ENCODE measurements at regions of chrX and their contacts with region 1.

Region 1: DNA sequence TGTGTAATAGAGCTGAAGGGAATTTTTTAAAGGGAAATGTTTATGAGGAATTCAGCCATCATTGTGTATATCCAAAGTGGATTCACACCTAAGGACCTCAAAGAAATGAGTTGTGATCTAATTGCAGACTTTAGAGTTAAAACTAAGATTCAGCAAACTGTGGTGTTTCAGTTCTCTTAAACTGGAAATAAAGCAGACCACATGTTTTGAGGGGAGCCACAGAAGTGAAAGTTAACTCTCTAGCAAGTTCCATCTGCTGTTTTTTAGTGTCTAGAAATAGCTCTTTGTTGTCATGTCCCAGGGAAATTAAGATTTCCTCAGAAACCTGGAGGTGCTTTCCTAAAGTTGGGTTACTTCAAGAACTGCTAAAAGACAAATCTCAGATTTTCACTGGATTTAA is 97.3 kb upstream of the DDX3X start:
- DNase-seq: peak; percentile 64
- ATAC-seq: peak; percentile 91
- H3K4me3 ChIP-seq: no peak overlapping the region
- H3K27ac ChIP-seq: peak overlapping the region; percentile 35; the same call in 1 of the 2 replicates
- H3K4me1 ChIP-seq: peaks cover 19% of the 10 kb centered on the region; the same call in 1 of the 2 replicates
- H3K27me3 ChIP-seq: no peaks in the 10 kb centered on the region
- CTCF ChIP-seq: no peak
- EP300 ChIP-seq: peak; percentile 84 to 85
- POLR2A ChIP-seq: no peak
- RAD21 ChIP-seq: no peak

Region 2: GRCh38 chrX:41224606-41225005 is 12.0 kb before region 1 on chrX:
- CTCF ChIA-PET with region 1: interaction called, 5 read pairs
- POLR2A ChIA-PET with region 1: no interaction called
- RAD21 ChIA-PET with region 1: no interaction called
- SMC1A ChIA-PET with region 1: interaction called, 12 read pairs
- in situ Hi-C with region 1: no loop called
- intact Hi-C with region 1: no loop called
- DNase-seq: no peak
- ATAC-seq: no peak
- H3K4me3 ChIP-seq: no peak overlapping the region
- H3K27ac ChIP-seq: no peak overlapping the region
- H3K4me1 ChIP-seq: no peaks in the 10 kb centered on the region
- H3K27me3 ChIP-seq: no peaks in the 10 kb centered on the region
- CTCF ChIP-seq: no peak
- EP300 ChIP-seq: no peak
- POLR2A ChIP-seq: no peak
- RAD21 ChIP-seq: no peak

Region 3: GRCh38 chrX:41259516-41259915 is 22.9 kb after region 1 on chrX:
- CTCF ChIA-PET with region 1: interaction called, 18 read pairs
- POLR2A ChIA-PET with region 1: interaction called, 3 read pairs
- RAD21 ChIA-PET with region 1: interaction called, 8 read pairs
- SMC1A ChIA-PET with region 1: interaction called, 12 read pairs
- in situ Hi-C with region 1: no loop called
- intact Hi-C with region 1: no loop called
- DNase-seq: no peak
- ATAC-seq: no peak
- H3K4me3 ChIP-seq: no peak overlapping the region
- H3K27ac ChIP-seq: no peak overlapping the region
- H3K4me1 ChIP-seq: peaks cover 6% of the 10 kb centered on the region; the same call in 1 of the 2 replicates
- H3K27me3 ChIP-seq: no peaks in the 10 kb centered on the region
- CTCF ChIP-seq: no peak
- EP300 ChIP-seq: no peak
- POLR2A ChIP-seq: no peak
- RAD21 ChIP-seq: no peak